ENCODE measurements at regions of chr5 and their contacts with region 1.

Region 1: DNA sequence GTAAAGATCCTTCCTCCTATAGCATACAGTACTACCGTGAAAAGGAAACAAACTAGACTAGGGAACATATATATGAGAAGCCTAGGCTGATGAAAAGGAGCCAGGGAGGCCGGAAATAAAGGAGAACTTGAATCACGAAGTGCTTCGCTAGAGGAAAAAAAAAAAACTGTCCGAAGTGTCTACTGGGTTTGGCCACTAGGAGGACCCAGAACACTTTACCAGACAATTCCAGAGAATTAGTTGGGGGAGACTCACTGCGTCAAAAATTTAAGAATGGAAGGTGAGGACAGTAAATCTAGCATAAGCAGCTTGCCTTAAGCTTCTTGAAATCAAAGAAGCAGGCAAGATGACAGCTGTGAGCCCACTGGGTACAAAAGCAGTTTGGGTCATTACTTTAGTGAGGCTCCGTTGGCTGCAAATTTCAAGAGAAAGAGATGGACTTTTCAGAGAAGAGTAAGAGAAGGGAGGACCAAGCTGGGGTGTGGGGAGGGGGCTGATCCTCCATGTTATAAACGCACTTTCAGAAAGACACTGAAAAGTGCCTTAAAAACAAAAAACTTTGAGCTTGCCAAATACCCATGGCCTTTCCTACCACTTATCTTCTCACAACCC is 47.4 kb downstream of the P4HA2 start:
- DNase-seq: no peak
- ATAC-seq: peak; percentile 25
- H3K4me3 Mint-ChIP-seq: peak overlapping the region; percentile 25
- H3K27ac Mint-ChIP-seq: peak overlapping the region; percentile 84
- H3K4me1 Mint-ChIP-seq: peaks cover 49% of the 10 kb centered on the region
- H3K27me3 Mint-ChIP-seq: no peaks in the 10 kb centered on the region

Region 2: GRCh38 chr5:132103332-132103951 is 76.8 kb before region 1 on chr5:
- CTCF ChIA-PET with region 1: interaction called, 13 read pairs
- DNase-seq: peak; percentile 91
- ATAC-seq: peak; percentile 75
- H3K4me3 Mint-ChIP-seq: peak overlapping the region; percentile 38
- H3K27ac Mint-ChIP-seq: peak overlapping the region; percentile 95
- H3K4me1 Mint-ChIP-seq: peaks cover 78% of the 10 kb centered on the region
- H3K27me3 Mint-ChIP-seq: no peaks in the 10 kb centered on the region

Region 3: GRCh38 chr5:132190161-132190817 is 10.0 kb after region 1 on chr5:
- CTCF ChIA-PET with region 1: interaction called, 27 read pairs
- DNase-seq: peak; percentile 41
- ATAC-seq: peak; percentile 86
- H3K4me3 Mint-ChIP-seq: no peak overlapping the region
- H3K27ac Mint-ChIP-seq: no peak overlapping the region
- H3K4me1 Mint-ChIP-seq: peaks cover 2% of the 10 kb centered on the region
- H3K27me3 Mint-ChIP-seq: peaks cover 8% of the 10 kb centered on the region

Region 4: GRCh38 chr5:132301344-132302271 is 121.4 kb after region 1 on chr5:
- CTCF ChIA-PET with region 1: no interaction called
- DNase-seq: no peak
- ATAC-seq: no peak
- H3K4me3 Mint-ChIP-seq: no peak overlapping the region
- H3K27ac Mint-ChIP-seq: no peak overlapping the region
- H3K4me1 Mint-ChIP-seq: no peaks in the 10 kb centered on the region
- H3K27me3 Mint-ChIP-seq: no peaks in the 10 kb centered on the region

Measured in activated CD8-positive, alpha-beta memory T cell treated with anti-CD3 and anti-CD28 coated beads, Interleukin-2, amount 10 ng/mL, durations not matched to agents 7 days and 5 days (primary cell).